MCF 10A (cell line): ENCODE measurements at regions of chr2 and their contacts with region 1.

Region 1: GRCh38 chr2:28870146-28870891 is at the start of gene TRMT61B:
- DNase-seq: peak; percentile 93
- H3K4me3 Mint-ChIP-seq: peak within 1 kb of the TSS; percentile 92
- H3K27ac Mint-ChIP-seq: peak within 1 kb of the TSS; percentile 79
- H3K4me1 Mint-ChIP-seq: peaks cover 9% of the 10 kb centered on the region
- H3K27me3 Mint-ChIP-seq: no peaks in the 10 kb centered on the region
- CTCF ChIP-seq: no peak
- total RNA-seq, gene TRMT61B: 10.4 and 13.4 TPM in 2 replicates

Region 2: GRCh38 chr2:28855193-28855592 is 15.1 kb before region 1 on chr2:
- CTCF ChIA-PET with region 1: interaction called, 4 read pairs
- POLR2A ChIA-PET with region 1: interaction called, 22 read pairs
- intact Hi-C with region 1: no loop called
- DNase-seq: no peak
- H3K4me3 Mint-ChIP-seq: no peak overlapping the region
- H3K27ac Mint-ChIP-seq: no peak overlapping the region
- H3K4me1 Mint-ChIP-seq: peaks cover 4% of the 10 kb centered on the region
- H3K27me3 Mint-ChIP-seq: no peaks in the 10 kb centered on the region
- CTCF ChIP-seq: no peak

Region 3: DNA sequence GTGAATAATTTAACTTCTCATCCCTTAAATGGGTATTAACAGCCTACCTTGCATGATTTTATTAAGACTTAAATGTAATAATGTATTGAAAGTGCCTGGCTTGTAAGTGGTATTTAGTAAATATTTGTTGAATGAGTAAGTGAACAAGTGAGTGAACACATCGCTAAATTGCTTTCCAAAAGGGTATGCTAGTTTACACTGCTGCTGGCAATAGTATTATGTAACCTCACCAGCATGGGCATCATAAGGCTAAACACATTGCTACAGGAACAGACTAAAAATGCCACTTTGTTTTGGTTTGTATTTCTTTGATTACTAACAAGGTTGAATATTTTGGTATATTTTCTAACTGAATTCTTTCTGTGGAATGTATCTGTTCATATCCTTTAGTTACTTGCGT is 34.0 kb after region 1 on chr2:
- CTCF ChIA-PET with region 1: interaction called, 3 read pairs
- POLR2A ChIA-PET with region 1: interaction called, 10 read pairs
- intact Hi-C with region 1: loop called (anchors 1 kb)
- DNase-seq: peak; percentile 36
- H3K4me3 Mint-ChIP-seq: no peak overlapping the region
- H3K27ac Mint-ChIP-seq: no peak overlapping the region
- H3K4me1 Mint-ChIP-seq: peaks cover 27% of the 10 kb centered on the region
- H3K27me3 Mint-ChIP-seq: no peaks in the 10 kb centered on the region
- CTCF ChIP-seq: no peak

Region 4: GRCh38 chr2:28981016-28981441 is 110.7 kb after region 1 on chr2 and contains the start of gene TOGARAM2:
- CTCF ChIA-PET with region 1: no interaction called
- POLR2A ChIA-PET with region 1: no interaction called
- intact Hi-C with region 1: no loop called
- DNase-seq: no peak
- H3K4me3 Mint-ChIP-seq: no peak within 1 kb of the TSS
- H3K27ac Mint-ChIP-seq: no peak within 1 kb of the TSS
- H3K4me1 Mint-ChIP-seq: peaks cover 7% of the 10 kb centered on the region
- H3K27me3 Mint-ChIP-seq: no peaks in the 10 kb centered on the region
- CTCF ChIP-seq: no peak
- total RNA-seq, gene TOGARAM2: 0.16 TPM in 1 of 2 replicates, not detected in the other